GM23248 (cell line): ENCODE measurements at regions of chr16 and their contacts with region 1.

Region 1: GRCh38 chr16:75218256-75219070 is at the start of gene CTRB1:
- DNase-seq: no peak
- H3K4me3 ChIP-seq: no peak within 1 kb of the TSS
- H3K27ac ChIP-seq: no peak within 1 kb of the TSS
- H3K4me1 ChIP-seq: no peaks in the 10 kb centered on the region
- H3K27me3 ChIP-seq: no peaks in the 10 kb centered on the region
- total RNA-seq, gene CTRB1: not detected in 2 replicates

Region 2: DNA sequence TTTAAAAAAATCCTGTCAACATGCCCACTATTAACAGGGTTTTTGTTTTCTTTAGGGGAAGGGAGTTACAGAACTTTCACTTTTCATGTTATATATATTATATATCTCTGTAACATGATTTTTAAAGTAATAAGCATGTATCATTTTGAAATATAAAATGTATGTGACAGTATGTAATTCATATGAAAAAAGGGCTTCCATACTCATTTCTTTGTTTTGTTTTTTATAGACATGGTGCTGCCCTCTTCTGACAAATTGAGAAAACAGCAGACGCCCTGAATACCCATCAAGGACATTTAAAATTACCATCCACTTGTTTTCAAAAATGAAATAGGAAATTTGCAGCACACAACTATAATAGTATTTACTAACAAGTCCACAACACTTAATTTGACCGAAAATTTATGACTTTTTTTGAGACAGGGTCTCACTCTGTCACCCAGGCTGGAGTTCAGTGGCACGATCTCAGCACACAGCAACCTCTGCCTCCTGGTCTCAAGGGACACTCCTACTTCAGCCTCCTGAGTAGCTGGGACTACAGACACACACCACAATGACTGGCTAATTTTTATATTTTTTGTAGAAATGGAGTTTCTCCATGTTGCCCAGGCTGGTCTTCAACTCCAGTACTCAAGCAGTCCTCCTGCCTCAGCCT is 184.5 kb after region 1 on chr16:
- in situ Hi-C with region 1: loop called (anchors 10 kb)
- DNase-seq: peak; percentile 75
- H3K4me3 ChIP-seq: peak overlapping the region; percentile 11
- H3K27ac ChIP-seq: peak overlapping the region; percentile 89
- H3K4me1 ChIP-seq: peaks cover 15% of the 10 kb centered on the region
- H3K27me3 ChIP-seq: no peaks in the 10 kb centered on the region

Region 3: DNA sequence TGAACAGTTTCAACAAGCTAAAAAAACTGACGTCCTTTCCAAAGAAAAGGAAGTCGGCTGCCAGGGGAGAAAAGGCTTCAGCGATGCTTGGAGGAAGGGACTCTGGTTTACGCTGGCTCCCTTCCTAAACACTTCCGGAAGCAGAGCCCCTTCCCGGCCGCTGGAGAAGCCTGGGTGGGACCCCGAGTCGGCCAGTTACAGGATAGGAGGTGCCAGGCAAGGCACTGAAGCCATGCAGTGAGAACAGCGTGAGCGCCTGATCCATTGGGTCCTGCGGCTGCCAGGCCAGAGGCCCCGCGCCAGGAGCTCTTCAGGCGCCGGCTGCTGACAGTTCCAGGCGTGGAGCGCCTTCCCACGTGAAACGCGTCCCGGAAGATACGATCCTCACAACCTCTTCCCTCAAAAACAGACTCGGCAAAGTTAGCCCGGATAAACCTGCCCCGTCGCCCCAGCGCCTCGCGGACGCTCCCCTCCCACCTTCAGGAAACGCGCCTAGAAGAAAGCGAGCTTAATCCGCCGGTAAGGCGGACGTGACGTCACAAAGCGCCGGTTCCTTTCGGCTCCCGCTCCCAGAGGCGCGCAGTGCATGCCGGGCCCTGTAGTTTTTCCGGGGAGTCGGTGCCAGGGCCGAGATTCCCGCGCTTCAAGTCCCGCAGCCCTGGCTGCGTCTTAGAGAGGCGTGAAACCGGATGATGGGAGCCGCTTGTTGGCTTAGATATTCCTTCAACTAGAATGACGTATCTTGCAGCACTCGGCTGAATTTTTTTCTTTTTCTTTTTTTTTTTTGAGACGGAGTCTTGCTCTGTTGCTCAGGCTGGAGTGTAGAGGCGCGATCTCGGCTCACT is 404.5 kb after region 1 on chr16 and contains the start of gene ADAT1:
- in situ Hi-C with region 1: loop called (anchors 25 kb)
- DNase-seq: peak; percentile 100
- H3K4me3 ChIP-seq: peak within 1 kb of the TSS; percentile 90
- H3K27ac ChIP-seq: peak within 1 kb of the TSS; percentile 70
- H3K4me1 ChIP-seq: peaks cover 18% of the 10 kb centered on the region
- H3K27me3 ChIP-seq: no peaks in the 10 kb centered on the region
- total RNA-seq, gene ADAT1: 31.3 and 40.1 TPM in 2 replicates

Region 4: GRCh38 chr16:75764154-75764768 is 545.8 kb after region 1 on chr16:
- in situ Hi-C with region 1: loop called (anchors 25 kb)
- DNase-seq: peak; percentile 79
- H3K4me3 ChIP-seq: no peak overlapping the region
- H3K27ac ChIP-seq: no peak overlapping the region
- H3K4me1 ChIP-seq: no peaks in the 10 kb centered on the region
- H3K27me3 ChIP-seq: peaks cover 9% of the 10 kb centered on the region; the same call in 1 of the 2 replicates